Body of pancreas (tissue), 4 donors: ENCODE measurements at regions of chr7 and their contacts with region 1.

Region 1: DNA sequence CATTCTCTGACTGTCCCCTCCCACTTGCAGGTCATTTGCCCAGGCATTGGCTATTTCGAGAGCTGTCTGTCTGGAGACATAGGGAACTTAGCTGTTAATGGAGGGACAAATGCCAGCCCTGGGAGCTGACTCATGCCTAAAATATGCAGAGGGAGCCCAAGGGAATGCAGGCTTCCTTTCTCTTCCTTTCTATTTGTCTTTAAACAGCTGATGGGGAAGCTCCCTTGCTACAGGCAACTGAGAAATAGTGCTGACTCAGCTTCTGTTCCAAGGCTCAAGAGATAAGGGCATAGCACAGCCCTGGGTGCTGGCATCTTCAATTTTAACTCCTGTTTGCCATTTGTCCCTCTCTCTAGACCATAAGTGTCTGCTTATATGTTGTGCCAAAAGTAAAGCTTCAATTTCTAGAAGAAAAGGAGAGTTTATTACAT is 82.7 kb upstream of the C1GALT1 start:
- DNase-seq: peak; percentile 76 to 85 (median 80)
- ATAC-seq: peak; percentile 96
- H3K4me3 ChIP-seq: no peak overlapping the region
- H3K27ac ChIP-seq: peak overlapping the region; percentile 33 to 46 (median 36)
- H3K4me1 ChIP-seq: peaks cover 15% of the 10 kb centered on the region
- H3K27me3 ChIP-seq: no peaks in the 10 kb centered on the region
- CTCF ChIP-seq: no peak
- POLR2A ChIP-seq: no peak

Region 2: DNA sequence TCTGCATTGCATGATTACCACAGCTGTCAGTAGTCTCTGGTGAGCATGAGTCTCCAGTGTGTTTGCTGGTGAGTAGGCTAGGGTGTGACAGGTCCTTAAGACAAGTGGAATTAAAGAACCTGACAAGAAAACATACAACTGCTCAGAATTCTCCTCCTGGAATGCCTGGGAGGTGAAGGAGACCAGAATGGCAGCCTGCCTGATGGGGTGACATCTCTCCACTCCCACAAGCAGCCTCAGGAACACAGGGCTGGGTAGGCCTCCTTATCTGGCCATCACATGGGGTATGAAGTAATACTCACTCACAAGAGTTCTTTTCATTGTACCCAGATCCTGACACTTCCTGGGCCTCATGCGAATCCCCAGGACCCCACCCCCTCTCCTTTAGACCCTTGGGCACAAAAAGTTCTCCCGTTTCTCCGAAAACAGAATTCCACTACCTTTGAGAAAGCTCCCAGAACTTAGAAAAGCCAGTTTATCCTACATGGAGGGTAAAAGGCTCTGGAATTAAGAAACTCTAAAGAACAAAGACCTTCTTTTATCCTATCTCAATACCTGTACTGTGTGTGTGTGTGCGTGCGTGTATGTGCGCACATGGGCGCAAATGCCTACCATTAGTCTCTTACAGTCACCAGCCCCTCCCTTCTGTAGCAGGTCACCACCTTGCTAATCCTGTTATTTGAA is 49.3 kb after region 1 on chr7:
- intact Hi-C with region 1: no loop called
- DNase-seq: no peak
- ATAC-seq: no peak
- H3K4me3 ChIP-seq: no peak overlapping the region
- H3K27ac ChIP-seq: no peak overlapping the region
- H3K4me1 ChIP-seq: peaks cover 8% of the 10 kb centered on the region
- H3K27me3 ChIP-seq: no peaks in the 10 kb centered on the region
- CTCF ChIP-seq: no peak
- POLR2A ChIP-seq: no peak

Region 3: GRCh38 chr7:7535691-7536090 is 436.1 kb after region 1 on chr7 and contains the start of gene COL28A1:
- intact Hi-C with region 1: loop called (anchors 10 kb)
- DNase-seq: no peak
- ATAC-seq: no peak
- H3K4me3 ChIP-seq: no peak within 1 kb of the TSS
- H3K27ac ChIP-seq: no peak within 1 kb of the TSS
- H3K4me1 ChIP-seq: no peaks in the 10 kb centered on the region
- H3K27me3 ChIP-seq: no peaks in the 10 kb centered on the region
- CTCF ChIP-seq: no peak
- POLR2A ChIP-seq: no peak
- total RNA-seq, gene COL28A1: 13.8 to 16.9 TPM